ENCODE measurements at regions of chr5 and their contacts with region 1.

Region 1: GRCh38 chr5:171055875-171056454 is 194.1 kb downstream of the RANBP17 start:
- DNase-seq: no peak
- H3K4me3 Mint-ChIP-seq: no peak overlapping the region
- H3K27ac Mint-ChIP-seq: no peak overlapping the region
- H3K4me1 Mint-ChIP-seq: no peaks in the 10 kb centered on the region
- H3K27me3 Mint-ChIP-seq: no peaks in the 10 kb centered on the region

Region 2: DNA sequence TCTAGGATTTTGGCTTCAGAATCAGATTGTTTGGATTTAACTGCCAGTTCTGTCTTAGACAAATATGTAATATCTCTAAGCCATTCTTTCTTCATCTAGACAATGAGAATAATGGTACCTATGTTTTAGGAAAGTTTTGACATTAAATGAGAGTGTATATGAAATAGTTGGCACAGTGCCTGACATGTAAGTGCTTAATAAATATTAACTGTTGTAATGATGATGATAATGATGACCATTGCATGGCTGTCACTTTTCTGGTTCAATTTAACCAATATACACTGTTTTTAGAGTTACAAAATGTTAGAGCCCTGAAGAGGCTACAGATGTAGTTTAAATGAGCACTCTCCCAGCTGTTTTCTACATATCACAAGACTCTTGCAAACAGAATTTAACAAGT is 62.5 kb before region 1 on chr5:
- intact Hi-C with region 1: no loop called
- DNase-seq: no peak
- H3K4me3 Mint-ChIP-seq: no peak overlapping the region
- H3K27ac Mint-ChIP-seq: no peak overlapping the region
- H3K4me1 Mint-ChIP-seq: no peaks in the 10 kb centered on the region
- H3K27me3 Mint-ChIP-seq: no peaks in the 10 kb centered on the region

Region 3: DNA sequence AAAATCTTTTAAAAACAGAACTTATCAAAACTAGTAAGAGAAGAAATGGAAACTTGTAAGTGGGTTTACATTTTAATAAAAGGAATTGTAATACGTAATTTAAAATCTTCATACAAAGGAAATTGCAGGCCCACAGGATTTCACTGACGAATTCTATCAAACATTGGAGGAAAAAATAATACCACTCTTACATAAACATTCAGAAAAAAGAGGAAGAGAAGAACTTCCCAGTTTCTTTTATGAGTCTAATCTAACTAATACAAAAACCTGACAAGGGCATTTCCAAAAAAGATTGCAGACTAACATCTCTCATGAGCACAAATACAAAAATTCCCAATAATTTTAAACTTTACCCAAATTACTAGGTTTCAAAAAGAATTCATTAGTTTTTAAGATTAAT is 45.1 kb before region 1 on chr5:
- intact Hi-C with region 1: loop called (anchors 1 kb)
- DNase-seq: no peak
- H3K4me3 Mint-ChIP-seq: no peak overlapping the region
- H3K27ac Mint-ChIP-seq: no peak overlapping the region
- H3K4me1 Mint-ChIP-seq: no peaks in the 10 kb centered on the region
- H3K27me3 Mint-ChIP-seq: no peaks in the 10 kb centered on the region

Region 4: DNA sequence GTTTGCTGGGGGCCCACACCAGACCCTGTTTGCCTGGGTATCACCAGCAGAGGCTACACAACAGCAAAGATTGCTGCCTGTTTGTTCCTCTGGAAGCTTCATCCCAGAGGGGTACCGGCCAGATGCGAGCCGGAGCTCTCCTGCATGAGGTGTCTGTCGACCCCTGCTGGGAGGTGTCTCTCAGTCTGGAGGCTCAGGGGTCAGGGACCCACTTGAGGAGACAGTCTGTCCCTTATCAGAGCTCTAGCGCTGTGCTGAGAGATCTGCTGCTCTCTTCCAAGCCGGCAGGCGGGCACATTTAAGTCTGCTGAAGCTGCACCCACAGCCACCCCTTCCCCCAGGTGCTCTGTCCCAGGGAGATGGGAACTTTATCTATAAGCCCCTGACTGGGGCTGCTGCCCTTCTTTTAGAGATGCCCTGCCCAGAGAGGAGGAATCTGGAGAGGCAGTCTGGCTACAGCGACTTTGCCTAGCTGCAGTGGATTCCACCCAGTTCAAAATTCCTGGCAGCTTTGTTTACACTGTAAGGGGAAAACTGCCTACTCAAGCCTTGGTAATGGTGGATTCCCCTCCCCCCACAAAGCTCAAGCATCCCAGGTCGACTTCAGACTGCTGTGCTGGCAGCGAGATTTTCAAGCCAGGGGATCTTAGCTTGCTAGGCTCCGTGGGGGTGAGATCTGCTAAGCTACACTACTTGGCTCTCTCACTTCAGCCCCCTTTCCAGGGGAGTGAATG is 47.1 kb after region 1 on chr5:
- intact Hi-C with region 1: no loop called
- DNase-seq: no peak
- H3K4me3 Mint-ChIP-seq: no peak overlapping the region
- H3K27ac Mint-ChIP-seq: no peak overlapping the region
- H3K4me1 Mint-ChIP-seq: no peaks in the 10 kb centered on the region
- H3K27me3 Mint-ChIP-seq: no peaks in the 10 kb centered on the region

Measured in activated CD4-positive, alpha-beta T cell treated with anti-CD3 and anti-CD28 coated beads, Interleukin-2, amount 10 ng/mL, durations not matched to agents 24 days and 14 days (primary cell).